ENCODE measurements at regions of chr2 and their contacts with region 1.

Region 1: GRCh38 chr2:215878482-215879055 is 134.8 kb downstream of the MREG start:
- DNase-seq: no peak
- H3K4me3 ChIP-seq: no peak overlapping the region
- H3K27ac ChIP-seq: peak overlapping the region in 1 of 4 donors; percentile 60
- H3K4me1 ChIP-seq: peaks cover 0 to 31% (median 11%) of the 10 kb centered on the region in 4 donors
- H3K27me3 ChIP-seq: no peaks in the 10 kb centered on the region
- CTCF ChIP-seq: no peak
- EP300 ChIP-seq: no peak
- POLR2A ChIP-seq: no peak

Region 2: GRCh38 chr2:215793747-215794595 is 84.6 kb before region 1 on chr2:
- intact Hi-C with region 1: loop called (anchors 5 kb)
- DNase-seq: no peak
- H3K4me3 ChIP-seq: no peak overlapping the region
- H3K27ac ChIP-seq: peak overlapping the region; percentile 48 to 72 (median 62)
- H3K4me1 ChIP-seq: peaks cover 0 to 42% (median 27%) of the 10 kb centered on the region in 4 donors
- H3K27me3 ChIP-seq: no peaks in the 10 kb centered on the region
- CTCF ChIP-seq: no peak
- EP300 ChIP-seq: no peak
- POLR2A ChIP-seq: no peak

Region 3: GRCh38 chr2:215862351-215862771 is 16.2 kb before region 1 on chr2:
- intact Hi-C with region 1: no loop called
- DNase-seq: no peak
- H3K4me3 ChIP-seq: no peak overlapping the region
- H3K27ac ChIP-seq: no peak overlapping the region
- H3K4me1 ChIP-seq: peaks cover 0 to 24% (median 17%) of the 10 kb centered on the region in 4 donors
- H3K27me3 ChIP-seq: no peaks in the 10 kb centered on the region
- CTCF ChIP-seq: no peak
- EP300 ChIP-seq: no peak
- POLR2A ChIP-seq: no peak

Region 4: GRCh38 chr2:215931256-215931903 is 52.8 kb after region 1 on chr2:
- intact Hi-C with region 1: no loop called
- DNase-seq: peak; percentile 80
- H3K4me3 ChIP-seq: no peak overlapping the region
- H3K27ac ChIP-seq: no peak overlapping the region
- H3K4me1 ChIP-seq: no peaks in the 10 kb centered on the region
- H3K27me3 ChIP-seq: no peaks in the 10 kb centered on the region
- CTCF ChIP-seq: peak; percentile 72 to 95 (median 84)
- EP300 ChIP-seq: no peak
- POLR2A ChIP-seq: no peak

Region 5: GRCh38 chr2:215982080-215982875 is 103.7 kb after region 1 on chr2:
- intact Hi-C with region 1: no loop called
- DNase-seq: no peak
- H3K4me3 ChIP-seq: no peak overlapping the region
- H3K27ac ChIP-seq: no peak overlapping the region
- H3K4me1 ChIP-seq: no peaks in the 10 kb centered on the region
- H3K27me3 ChIP-seq: no peaks in the 10 kb centered on the region
- CTCF ChIP-seq: no peak
- EP300 ChIP-seq: no peak
- POLR2A ChIP-seq: no peak

Measured in sigmoid colon (tissue), 7 donors.